ENCODE measurements at regions of chrX and their contacts with region 1.

Region 1: DNA sequence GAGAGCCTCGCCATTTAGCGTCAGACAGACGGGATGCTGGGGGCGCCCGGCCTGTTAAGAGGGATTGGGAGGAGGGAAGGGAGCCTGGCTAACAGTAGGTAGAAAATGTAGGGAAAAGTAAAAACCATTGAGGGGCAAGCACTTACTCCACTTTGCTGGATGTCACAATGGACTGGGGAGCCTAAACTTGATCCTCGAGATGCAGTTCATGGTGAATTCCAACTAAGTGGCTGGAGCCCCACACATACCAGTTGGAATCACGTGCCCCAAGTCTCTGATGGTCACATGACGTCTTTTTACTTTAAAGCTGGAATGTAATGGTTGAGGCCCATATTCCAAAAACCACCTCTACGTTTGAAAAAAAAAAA is 1.5 kb downstream of the PLS3 start:
- DNase-seq: no peak
- H3K4me3 ChIP-seq: peak overlapping the region; percentile 72
- H3K27ac ChIP-seq: peak overlapping the region; percentile 73
- H3K27me3 ChIP-seq: no peaks in the 10 kb centered on the region
- CTCF ChIP-seq: no peak

Region 2: GRCh38 chrX:115583496-115584004 is 21.1 kb after region 1 on chrX:
- CTCF ChIA-PET with region 1: no interaction called
- POLR2A ChIA-PET with region 1: interaction called, 10 read pairs
- DNase-seq: no peak
- H3K4me3 ChIP-seq: peak overlapping the region; percentile 12; the same call in 1 of the 2 replicates
- H3K27ac ChIP-seq: peak overlapping the region; percentile 22
- H3K27me3 ChIP-seq: no peaks in the 10 kb centered on the region
- CTCF ChIP-seq: no peak

Measured in AG04450 (cell line).